ENCODE measurements at regions of chr5 and their contacts with region 1.

Region 1: DNA sequence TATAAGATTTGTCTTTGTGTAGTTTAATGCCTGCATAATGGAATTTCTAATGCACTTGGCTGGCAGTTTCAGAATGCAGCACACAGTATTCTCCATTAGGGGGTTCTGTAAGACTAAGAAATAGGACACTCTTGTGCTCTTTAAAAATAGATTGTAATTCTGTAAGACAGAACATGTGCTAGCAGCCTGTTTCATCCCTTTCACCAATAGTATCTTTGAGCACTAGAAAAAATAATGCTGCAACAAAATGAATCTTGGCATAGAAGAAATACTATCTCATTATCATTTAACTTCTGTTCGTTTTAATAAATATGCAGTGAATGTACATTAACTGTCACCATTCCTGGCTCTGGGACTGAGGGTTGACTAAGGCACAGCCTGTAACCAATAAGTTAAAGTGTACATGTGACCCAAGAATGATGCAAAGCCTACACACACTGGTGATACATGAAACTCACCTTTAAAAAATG is 23.8 kb upstream of the ZNF622 start:
- ATAC-seq: peak; percentile 56 to 98 (median 92)
- H3K4me3 ChIP-seq: no peak overlapping the region
- H3K27ac ChIP-seq: no peak overlapping the region
- H3K4me1 ChIP-seq: peaks cover 0 to 4% of the 10 kb centered on the region in 2 donors

Region 2: DNA sequence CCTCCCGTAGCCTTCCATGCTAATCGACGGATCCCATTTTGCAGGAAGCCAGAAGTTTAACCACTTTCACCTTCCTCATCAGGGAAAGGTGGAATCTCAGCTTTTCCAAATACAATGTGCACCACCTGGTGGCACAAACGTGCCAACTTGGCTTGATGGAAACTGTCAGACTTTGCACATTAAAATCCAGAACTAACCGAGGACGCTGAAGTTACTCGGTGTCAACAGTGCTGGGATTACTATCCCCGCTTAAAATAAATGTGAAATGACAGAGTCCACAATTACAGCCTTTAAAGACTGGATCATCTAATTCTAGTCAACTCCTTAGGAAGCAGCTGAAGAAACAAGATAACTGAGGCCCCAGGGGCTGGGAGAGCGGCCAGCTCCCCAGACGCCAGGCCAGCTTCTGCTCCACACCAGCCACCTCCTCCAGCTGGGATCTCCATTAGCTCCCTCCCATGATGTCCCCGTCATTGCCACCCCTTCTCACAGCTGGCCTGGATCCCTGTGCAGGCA is 177.6 kb after region 1 on chr5:
- in situ Hi-C with region 1: loop called in 1 of 9 experiments (anchors 10 kb)
- ATAC-seq: peak in 1 of 8 experiments; percentile 54
- H3K4me3 ChIP-seq: no peak overlapping the region
- H3K27ac ChIP-seq: no peak overlapping the region
- H3K4me1 ChIP-seq: peaks cover 0 to 7% of the 10 kb centered on the region in 2 donors

Measured in motor neuron (in vitro differentiated cells).